SK-N-SH (cell line): ENCODE measurements at regions of chr4 and their contacts with region 1.

Region 1: GRCh38 chr4:78059524-78059889 is 2.4 kb downstream of the FRAS1 start:
- DNase-seq: peak; percentile 70
- H3K4me3 ChIP-seq: peak overlapping the region; percentile 67 to 91
- H3K27ac ChIP-seq: peak overlapping the region; percentile 57 to 60
- H3K4me1 ChIP-seq: peaks cover 0 to 8% of the 10 kb centered on the region in 2 experiments; a peak in 1 of 4 replicates
- H3K27me3 ChIP-seq: no peaks in the 10 kb centered on the region
- CTCF ChIP-seq: peak; percentile 84
- EP300 ChIP-seq: no peak
- RAD21 ChIP-seq: peak; percentile 79

Region 2: DNA sequence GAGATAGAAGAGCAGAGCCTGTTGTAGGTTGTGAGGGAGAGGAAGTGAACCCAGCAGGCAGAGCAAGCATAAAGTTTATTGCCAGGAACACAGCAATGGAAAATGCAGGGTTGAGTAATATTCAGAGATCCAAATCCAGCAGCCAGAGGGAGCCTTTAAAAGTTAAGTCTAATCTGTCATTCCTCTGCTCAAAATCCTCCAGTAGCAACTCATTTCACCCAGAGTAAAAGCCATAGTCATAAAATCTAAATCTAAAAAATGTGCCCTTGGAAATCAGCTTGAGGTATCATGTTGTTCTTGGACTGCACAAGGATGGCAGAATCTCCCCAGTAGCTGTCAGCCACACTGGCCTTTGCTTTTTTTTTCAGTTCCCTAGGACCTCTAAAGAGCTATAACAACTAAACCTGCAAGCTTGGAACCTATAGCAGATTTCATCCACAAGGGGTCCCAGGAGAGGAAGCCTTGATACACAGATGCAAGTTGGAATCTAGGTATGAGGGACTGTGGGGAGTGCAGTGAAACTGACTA is 65.2 kb before region 1 on chr4:
- CTCF ChIA-PET with region 1: interaction called, 14 read pairs
- POLR2A ChIA-PET with region 1: interaction called, 3 read pairs
- DNase-seq: peak; percentile 57
- H3K4me3 ChIP-seq: no peak overlapping the region; a peak in 1 of 4 replicates
- H3K27ac ChIP-seq: peak overlapping the region in 1 of 2 experiments; percentile 53; a peak in 1 of 4 replicates
- H3K4me1 ChIP-seq: peaks cover 0 to 35% of the 10 kb centered on the region in 2 experiments; a peak in 2 of 4 replicates
- H3K27me3 ChIP-seq: no peaks in the 10 kb centered on the region
- CTCF ChIP-seq: peak; percentile 79
- EP300 ChIP-seq: peak in 1 of 2 experiments; percentile 29; a peak in 1 of 4 replicates
- RAD21 ChIP-seq: peak; percentile 71

Region 3: DNA sequence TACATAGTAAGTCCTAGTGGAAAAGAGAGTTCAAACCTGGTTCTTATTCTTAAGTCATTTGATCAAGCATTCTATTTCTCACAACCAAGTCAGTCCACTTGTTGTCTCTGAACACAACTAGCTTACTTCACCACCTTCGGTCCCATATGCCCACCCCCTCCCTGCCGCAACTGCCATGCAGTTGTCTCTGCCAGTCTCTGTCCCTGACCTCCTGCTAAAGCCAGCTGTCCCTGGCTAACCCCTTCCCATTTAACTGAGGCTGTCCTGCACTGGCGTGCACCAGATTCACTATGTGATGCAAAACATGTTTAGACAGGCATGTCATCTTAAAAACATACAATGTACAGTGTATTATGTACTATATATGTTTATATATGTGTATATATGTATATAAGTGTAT is 10.4 kb after region 1 on chr4:
- CTCF ChIA-PET with region 1: interaction called, 20 read pairs
- POLR2A ChIA-PET with region 1: no interaction called
- DNase-seq: no peak
- H3K4me3 ChIP-seq: no peak overlapping the region
- H3K27ac ChIP-seq: no peak overlapping the region
- H3K4me1 ChIP-seq: no peaks in the 10 kb centered on the region
- H3K27me3 ChIP-seq: no peaks in the 10 kb centered on the region
- CTCF ChIP-seq: no peak
- EP300 ChIP-seq: no peak
- RAD21 ChIP-seq: no peak

Region 4: DNA sequence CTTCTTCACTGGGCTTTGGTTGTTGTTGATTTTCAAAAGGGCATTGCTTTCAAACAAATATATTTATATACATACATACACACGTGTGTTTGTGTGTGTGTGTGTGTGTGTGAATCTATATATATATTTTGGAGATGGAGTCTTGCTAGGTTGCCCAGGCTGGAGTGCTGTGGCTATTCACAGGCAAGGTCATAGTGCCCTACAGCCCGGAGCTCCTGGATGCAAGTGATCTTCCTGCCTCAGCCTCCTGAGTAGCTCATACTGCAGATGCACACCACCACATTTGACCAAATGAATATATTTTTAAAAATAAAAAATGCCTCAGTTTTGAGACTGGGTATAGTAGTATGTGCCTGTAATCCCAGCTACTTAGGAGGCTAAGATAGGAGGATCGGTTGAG is 32.0 kb after region 1 on chr4:
- CTCF ChIA-PET with region 1: interaction called, 10 read pairs
- POLR2A ChIA-PET with region 1: no interaction called
- DNase-seq: no peak
- H3K4me3 ChIP-seq: no peak overlapping the region
- H3K27ac ChIP-seq: no peak overlapping the region
- H3K4me1 ChIP-seq: peaks cover 0 to 6% of the 10 kb centered on the region in 2 experiments; a peak in 1 of 4 replicates
- H3K27me3 ChIP-seq: no peaks in the 10 kb centered on the region
- CTCF ChIP-seq: no peak
- EP300 ChIP-seq: no peak
- RAD21 ChIP-seq: no peak

Region 5: DNA sequence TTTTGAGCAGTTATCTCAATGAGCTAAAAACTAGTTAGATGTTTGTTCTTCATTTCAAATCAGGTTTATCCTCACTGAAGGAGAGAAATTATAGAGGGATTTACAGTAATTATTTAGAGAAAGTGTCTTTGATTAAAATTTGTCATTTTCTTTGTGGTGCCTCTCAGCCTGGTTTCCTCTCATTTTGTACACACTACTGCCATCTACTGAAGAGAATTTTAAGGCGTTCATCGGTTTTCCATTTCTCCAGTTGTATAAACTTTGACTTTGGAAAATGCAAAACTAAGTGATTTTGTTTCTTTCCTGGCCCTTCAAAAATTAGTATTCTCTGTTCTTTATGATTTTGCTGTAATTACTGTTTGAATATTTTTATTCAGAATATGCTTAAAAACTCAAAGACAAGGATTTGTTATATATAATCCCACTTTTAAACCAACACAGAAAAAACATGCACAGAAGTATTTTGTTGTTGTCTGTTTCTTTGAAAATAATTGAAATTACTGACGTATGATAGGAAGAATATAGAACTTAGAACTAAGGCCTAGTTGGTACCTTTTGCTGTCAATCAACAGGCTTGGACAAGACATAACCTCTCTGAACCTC is 457.6 kb after region 1 on chr4:
- CTCF ChIA-PET with region 1: interaction called, 77 read pairs
- POLR2A ChIA-PET with region 1: no interaction called
- DNase-seq: peak; percentile 33
- H3K4me3 ChIP-seq: peak overlapping the region in 1 of 2 experiments; percentile 23; a peak in 1 of 4 replicates
- H3K27ac ChIP-seq: no peak overlapping the region
- H3K4me1 ChIP-seq: no peaks in the 10 kb centered on the region; a peak in 2 of 4 replicates
- H3K27me3 ChIP-seq: no peaks in the 10 kb centered on the region
- CTCF ChIP-seq: peak; percentile 86
- EP300 ChIP-seq: no peak
- RAD21 ChIP-seq: peak; percentile 90